PC-9 (cell line): ENCODE measurements at regions of chr1 and their contacts with region 1.

Region 1: DNA sequence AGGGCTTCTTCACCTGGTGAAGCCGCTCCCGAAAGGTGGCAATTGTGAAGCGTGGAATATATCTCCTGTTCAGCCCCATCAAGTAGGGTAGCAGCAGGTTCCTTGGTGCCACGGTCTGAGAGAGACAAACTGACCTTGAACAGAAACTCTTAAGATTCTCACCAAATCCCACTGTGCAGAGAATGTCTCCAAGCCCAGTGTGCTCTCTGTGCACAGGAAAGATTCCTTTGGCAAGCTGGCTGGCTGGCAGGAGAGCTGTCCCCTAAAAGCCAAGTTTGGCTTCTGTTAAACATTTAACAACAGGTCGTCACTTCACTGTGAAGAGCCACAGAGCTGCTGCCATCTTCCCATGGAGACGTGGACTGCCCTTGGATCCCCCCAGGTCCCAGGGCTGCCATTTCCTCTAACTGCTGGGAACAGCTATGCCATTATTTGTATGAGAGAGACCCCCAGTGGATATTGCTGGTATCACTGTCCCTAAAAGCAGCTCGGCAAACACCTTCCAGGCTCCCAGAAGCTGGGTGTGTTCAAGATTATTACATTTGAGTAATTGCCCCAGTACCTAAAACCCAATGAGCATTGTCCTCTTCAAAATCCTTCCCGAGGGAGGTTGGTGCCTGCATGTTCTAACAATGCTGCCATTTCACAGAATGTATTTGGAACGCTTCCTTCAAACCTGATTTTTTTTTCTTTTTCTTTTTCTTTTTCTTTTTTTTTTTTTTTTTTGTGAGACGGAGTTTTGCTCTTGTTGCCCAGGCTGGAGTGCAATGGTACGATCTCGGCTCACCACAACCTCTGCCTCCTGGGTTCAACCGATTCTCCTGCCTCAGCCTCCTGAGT is 71.8 kb downstream of the CD58 start:
- DNase-seq: peak; percentile 58 to 67
- H3K4me3 ChIP-seq: no peak overlapping the region
- H3K27ac ChIP-seq: no peak overlapping the region
- H3K4me1 ChIP-seq: peaks cover 57% of the 10 kb centered on the region
- H3K27me3 ChIP-seq: no peaks in the 10 kb centered on the region
- CTCF ChIP-seq: peak; percentile 99

Region 2: GRCh38 chr1:115782571-115783281 is 716.3 kb before region 1 on chr1:
- CTCF ChIA-PET with region 1: no interaction called
- POLR2A ChIA-PET with region 1: no interaction called
- intact Hi-C with region 1: loop called (anchors 10 kb)
- DNase-seq: peak; percentile 73 to 100
- H3K4me3 ChIP-seq: no peak overlapping the region
- H3K27ac ChIP-seq: peak overlapping the region; percentile 84
- H3K4me1 ChIP-seq: peaks cover 32% of the 10 kb centered on the region
- H3K27me3 ChIP-seq: no peaks in the 10 kb centered on the region
- CTCF ChIP-seq: no peak; the same call in 1 of the 2 replicates

Region 3: GRCh38 chr1:116139592-116140134 is 359.3 kb before region 1 on chr1:
- CTCF ChIA-PET with region 1: interaction called, 27 read pairs
- POLR2A ChIA-PET with region 1: no interaction called
- intact Hi-C with region 1: loop called (anchors 1 kb)
- DNase-seq: no peak
- H3K4me3 ChIP-seq: no peak overlapping the region
- H3K27ac ChIP-seq: no peak overlapping the region
- H3K4me1 ChIP-seq: no peaks in the 10 kb centered on the region
- H3K27me3 ChIP-seq: no peaks in the 10 kb centered on the region
- CTCF ChIP-seq: no peak

Region 4: GRCh38 chr1:116151739-116152576 is 347.1 kb before region 1 on chr1:
- CTCF ChIA-PET with region 1: interaction called, 15 read pairs
- POLR2A ChIA-PET with region 1: no interaction called
- intact Hi-C with region 1: no loop called
- DNase-seq: peak; percentile 65 to 80
- H3K4me3 ChIP-seq: peak overlapping the region; percentile 60
- H3K27ac ChIP-seq: no peak overlapping the region
- H3K4me1 ChIP-seq: peaks cover 6% of the 10 kb centered on the region; the same call in 1 of the 2 replicates
- H3K27me3 ChIP-seq: no peaks in the 10 kb centered on the region
- CTCF ChIP-seq: peak; percentile 92